H1 (cell line): ENCODE measurements at regions of chr19 and their contacts with region 1.

Region 1: GRCh38 chr19:4754248-4754647 is 30.6 kb upstream of the DPP9 start:
- DNase-seq: no peak
- H3K4me3 ChIP-seq: no peak overlapping the region
- H3K27ac ChIP-seq: no peak overlapping the region
- H3K4me1 ChIP-seq: peaks cover 0 to under 1% (median under 1%) of the 10 kb centered on the region in 4 experiments; a peak in 1 of 7 replicates
- H3K27me3 ChIP-seq: peaks cover 0 to 7% (median 4%) of the 10 kb centered on the region in 4 experiments; a peak in 4 of 7 replicates
- CTCF ChIP-seq: no peak
- EP300 ChIP-seq: no peak
- POLR2A ChIP-seq: no peak
- RAD21 ChIP-seq: no peak

Region 2: GRCh38 chr19:4768934-4769777 is 14.9 kb after region 1 on chr19:
- CTCF ChIA-PET with region 1: interaction called, 4 read pairs
- POLR2A ChIA-PET with region 1: interaction called, 22 read pairs
- DNase-seq: peak; percentile 57 to 99
- H3K4me3 ChIP-seq: peak overlapping the region in 2 of 4 experiments; percentile 14 to 17; a peak in 2 of 8 replicates
- H3K27ac ChIP-seq: no peak overlapping the region
- H3K4me1 ChIP-seq: peaks cover 0 to 3% (median 0%) of the 10 kb centered on the region in 4 experiments; a peak in 1 of 7 replicates
- H3K27me3 ChIP-seq: 0 out of 7 replicates have a peak, but pooled peaks cover 0 to 2% (median 0%) of the 10 kb centered on the region in 4 experiments
- CTCF ChIP-seq: no peak
- EP300 ChIP-seq: peak in 1 of 2 experiments; percentile 78; a peak in 2 of 3 replicates
- POLR2A ChIP-seq: peak; percentile 62 to 68
- RAD21 ChIP-seq: 0 out of 4 replicates have a peak, but pooled peaks of 1 of the 2 experiments have one; percentile 6